ENCODE measurements at regions of chr1 and their contacts with region 1.

Region 1: GRCh38 chr1:19074902-19075721 is 118.6 kb upstream of the IFFO2 start:
- DNase-seq: peak in 2 of 10 donors; percentile 19 to 35
- ATAC-seq: peak; percentile 16 to 29
- H3K4me3 Mint-ChIP-seq: peak overlapping the region; percentile 56 to 83 (median 68)
- H3K27ac Mint-ChIP-seq: peak overlapping the region in 9 of 10 donors; percentile 60 to 94 (median 75)
- H3K4me1 Mint-ChIP-seq: peaks cover 15 to 49% (median 44%) of the 10 kb centered on the region in 4 donors
- H3K27me3 Mint-ChIP-seq: peaks cover 0 to 10% (median 0%) of the 10 kb centered on the region in 5 donors

Region 2: DNA sequence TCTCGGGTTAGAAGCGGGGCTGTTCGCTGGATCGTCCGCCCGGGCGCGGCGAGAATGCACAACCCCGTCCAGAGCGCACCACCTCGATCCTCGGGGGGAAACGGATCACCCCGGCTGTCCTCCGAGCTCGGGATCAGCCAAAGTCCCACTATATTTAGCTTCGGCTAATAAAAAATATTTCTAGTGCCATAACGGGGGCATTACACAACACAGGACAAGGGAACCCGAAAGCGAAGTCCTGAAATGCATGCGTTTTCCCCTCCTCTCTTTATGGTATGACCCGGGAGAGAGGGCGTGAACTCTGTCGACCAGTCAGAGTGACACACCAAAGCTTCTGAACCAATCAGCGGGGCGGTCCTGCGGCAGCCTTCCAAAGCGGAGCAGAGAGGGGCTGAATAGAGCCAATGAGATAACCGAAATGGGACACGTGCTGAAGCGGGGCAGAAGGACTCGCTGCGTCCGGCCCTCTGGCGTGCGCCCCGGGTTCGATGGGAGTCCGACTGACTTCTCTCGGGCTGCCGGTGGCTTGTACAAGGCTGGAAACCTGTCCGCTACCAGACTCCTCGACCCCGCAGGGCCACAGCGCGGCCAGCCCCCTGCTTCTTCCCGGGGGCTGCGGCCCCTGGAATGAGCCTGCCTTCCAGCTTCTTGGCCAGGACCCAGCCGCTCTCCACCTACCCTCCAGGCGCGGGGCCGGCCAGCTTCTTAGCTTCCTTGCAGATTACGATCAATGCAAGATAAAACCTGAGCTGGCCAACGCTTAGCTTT is 172.4 kb before region 1 on chr1 and contains the start of gene ALDH4A1:
- POLR2A ChIA-PET with region 1: interaction called, 15 read pairs
- DNase-seq: peak; percentile 77 to 97 (median 92)
- ATAC-seq: peak; percentile 96 to 98
- H3K4me3 Mint-ChIP-seq: peak within 1 kb of the TSS; percentile 88 to 95 (median 92)
- H3K27ac Mint-ChIP-seq: peak within 1 kb of the TSS; percentile 82 to 99 (median 98)
- H3K4me1 Mint-ChIP-seq: peaks cover 15 to 58% (median 37%) of the 10 kb centered on the region in 4 donors
- H3K27me3 Mint-ChIP-seq: no peaks in the 10 kb centered on the region
- polyA plus RNA-seq, gene ALDH4A1: 0.31 to 2.0 (median 0.39) TPM

Region 3: GRCh38 chr1:18913065-18913835 is 161.9 kb before region 1 on chr1:
- POLR2A ChIA-PET with region 1: no interaction called
- DNase-seq: peak; percentile 49 to 84 (median 67)
- ATAC-seq: peak; percentile 82 to 87
- H3K4me3 Mint-ChIP-seq: no peak overlapping the region
- H3K27ac Mint-ChIP-seq: peak overlapping the region in 5 of 10 donors; percentile 48 to 91 (median 78)
- H3K4me1 Mint-ChIP-seq: peaks cover 9 to 18% (median 14%) of the 10 kb centered on the region in 4 donors
- H3K27me3 Mint-ChIP-seq: no peaks in the 10 kb centered on the region

Region 4: DNA sequence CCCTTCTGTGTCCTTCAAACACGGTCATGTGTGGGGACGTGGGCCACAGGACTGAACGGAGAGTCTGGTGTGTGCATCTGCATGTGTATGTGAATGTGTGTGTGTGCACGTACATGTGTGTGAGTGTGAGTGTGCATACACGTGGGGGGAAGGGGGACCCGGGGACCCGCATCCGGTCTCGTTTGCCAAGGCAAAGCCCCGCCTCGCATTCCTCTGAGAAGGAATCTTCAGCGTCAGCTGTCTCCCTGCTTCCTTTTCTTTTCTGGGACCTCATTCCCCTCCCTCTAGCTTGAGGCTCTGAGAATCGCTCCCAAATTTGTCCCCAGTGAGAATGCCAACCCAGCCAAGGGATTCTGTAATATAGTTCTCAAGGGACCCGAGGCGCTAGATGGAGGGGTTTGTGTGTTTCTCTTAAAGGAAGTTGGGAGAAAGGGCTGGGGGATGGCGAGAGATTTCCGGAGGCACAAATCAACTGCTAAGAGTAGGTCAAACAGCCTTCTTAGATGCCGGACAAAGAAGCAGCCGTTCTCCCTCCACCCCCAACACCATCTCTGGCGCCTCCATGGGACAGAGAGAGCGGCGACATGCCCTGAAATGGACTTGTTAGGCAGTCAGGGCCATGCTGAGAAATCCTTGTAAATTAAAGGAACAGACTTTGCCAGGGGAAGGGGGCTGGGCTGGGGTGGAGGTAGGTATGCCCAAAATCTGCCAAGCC is 125.3 kb before region 1 on chr1:
- POLR2A ChIA-PET with region 1: interaction called, 16 read pairs
- DNase-seq: peak in 1 of 10 donors; percentile 34
- ATAC-seq: no peak
- H3K4me3 Mint-ChIP-seq: peak overlapping the region; percentile 76 to 95 (median 85)
- H3K27ac Mint-ChIP-seq: peak overlapping the region; percentile 95 to 100 (median 98)
- H3K4me1 Mint-ChIP-seq: peaks cover 60 to 98% (median 97%) of the 10 kb centered on the region in 4 donors
- H3K27me3 Mint-ChIP-seq: no peaks in the 10 kb centered on the region

Region 5: GRCh38 chr1:19123837-19124236 is 48.7 kb after region 1 on chr1:
- POLR2A ChIA-PET with region 1: no interaction called
- DNase-seq: peak in 3 of 10 donors; percentile 19 to 43 (median 28)
- ATAC-seq: peak in 1 of 2 donors; percentile 90
- H3K4me3 Mint-ChIP-seq: peak overlapping the region in 7 of 10 donors; percentile 1 to 60 (median 11)
- H3K27ac Mint-ChIP-seq: peak overlapping the region in 8 of 10 donors; percentile 66 to 89 (median 75)
- H3K4me1 Mint-ChIP-seq: peaks cover 0 to 31% (median 20%) of the 10 kb centered on the region in 4 donors
- H3K27me3 Mint-ChIP-seq: no peaks in the 10 kb centered on the region

Measured in naive thymus-derived CD8-positive, alpha-beta T cell (primary cell).